Heart right ventricle (tissue), 16 donors: ENCODE measurements at regions of chr1 and their contacts with region 1.

Region 1: DNA sequence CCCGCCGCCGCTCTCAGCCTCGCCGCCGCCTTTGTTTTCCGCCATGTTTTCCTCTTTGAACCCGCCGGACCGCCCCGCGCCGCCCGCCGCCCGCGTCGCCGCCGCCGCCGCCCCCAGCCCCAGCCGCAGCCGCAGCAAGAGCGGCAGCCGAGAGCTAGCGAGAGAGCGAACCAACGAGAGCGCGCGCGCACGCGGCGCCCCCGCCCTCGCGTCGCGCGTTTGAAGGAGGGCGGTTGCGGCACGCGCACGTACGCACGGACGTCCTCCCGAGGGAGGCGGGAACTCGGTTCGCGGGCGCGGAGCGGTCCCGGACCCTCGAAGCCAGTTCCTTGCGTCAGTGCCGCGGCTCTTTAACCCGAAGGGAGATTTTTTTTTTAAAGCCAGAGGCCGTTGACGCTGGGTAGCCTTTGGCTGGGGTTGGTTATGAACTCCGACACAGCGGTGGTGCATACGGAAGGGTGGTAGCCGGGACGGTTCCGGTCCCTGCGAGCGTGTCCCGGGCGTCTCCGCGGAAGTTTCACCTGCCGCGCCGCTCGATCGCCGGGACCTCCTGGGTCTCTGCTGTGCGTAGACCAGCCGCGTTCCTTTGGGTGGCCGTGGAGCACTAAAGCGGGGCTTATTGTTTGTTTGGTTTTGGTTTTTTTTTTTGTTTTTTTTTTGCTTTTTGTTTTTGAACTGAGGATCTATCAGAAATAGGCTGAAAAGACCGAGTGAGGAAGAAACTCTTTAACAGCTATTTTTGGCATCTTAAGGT is at the start of gene TRIM33:
- DNase-seq: peak; percentile 92 to 94
- ATAC-seq: peak; percentile 95 to 97 (median 96)
- H3K4me3 ChIP-seq: peak within 1 kb of the TSS; percentile 82 to 100 (median 94)
- H3K27ac ChIP-seq: peak within 1 kb of the TSS; percentile 89 to 99 (median 96)
- H3K4me1 ChIP-seq: peaks cover 6 to 50% (median 41%) of the 10 kb centered on the region in 9 donors
- H3K27me3 ChIP-seq: no peaks in the 10 kb centered on the region
- CTCF ChIP-seq: peak in 2 of 9 donors; percentile 8 to 17
- total RNA-seq, gene TRIM33: 13.6 to 28.7 (median 21.4) TPM

Region 2: GRCh38 chr1:114346480-114347029 is 164.7 kb before region 1 on chr1:
- intact Hi-C with region 1: loop called in 2 of 10 experiments (anchors 5 kb)
- DNase-seq: peak; percentile 93 to 97
- ATAC-seq: peak; percentile 98 to 99 (median 98)
- H3K4me3 ChIP-seq: peak overlapping the region; percentile 44 to 65 (median 56)
- H3K27ac ChIP-seq: peak overlapping the region in 9 of 10 donors; percentile 36 to 87 (median 74)
- H3K4me1 ChIP-seq: peaks cover 2 to 24% (median 9%) of the 10 kb centered on the region in 9 donors
- H3K27me3 ChIP-seq: no peaks in the 10 kb centered on the region
- CTCF ChIP-seq: peak in 7 of 9 donors; percentile 100

Region 3: DNA sequence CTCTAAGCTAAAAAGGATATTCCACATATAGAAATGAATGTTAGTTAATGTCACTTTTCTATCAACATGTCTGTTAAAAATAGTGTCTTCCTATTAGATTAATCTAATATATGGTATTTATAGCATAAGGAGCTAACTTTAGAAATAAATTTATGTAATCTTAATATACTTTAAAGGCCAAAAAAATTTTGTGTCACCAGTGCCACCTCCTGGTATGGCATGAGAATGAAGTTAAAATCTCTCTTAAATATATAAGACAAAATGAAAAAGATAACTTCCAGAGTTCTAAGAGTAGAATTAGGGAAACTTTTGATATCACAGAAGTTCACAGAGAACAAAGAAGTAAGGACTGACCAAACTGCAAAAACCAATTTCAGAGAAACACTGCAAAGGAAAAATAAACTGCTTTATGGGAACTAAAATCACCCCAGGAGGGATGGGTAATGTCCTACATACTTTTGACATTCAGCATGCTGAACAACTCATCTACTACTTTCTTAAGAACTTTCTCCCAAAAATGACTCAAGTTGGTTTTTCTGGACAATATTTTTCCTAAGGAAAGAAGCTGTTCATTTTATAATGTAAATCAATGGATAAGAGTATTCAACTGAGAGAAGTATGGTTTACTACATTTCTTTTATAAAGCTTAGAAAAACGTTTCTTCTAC is 83.0 kb before region 1 on chr1:
- intact Hi-C with region 1: loop called in 1 of 10 experiments (anchors 5 kb)
- DNase-seq: no peak
- ATAC-seq: peak in 1 of 8 donors; percentile 12
- H3K4me3 ChIP-seq: no peak overlapping the region
- H3K27ac ChIP-seq: peak overlapping the region in 2 of 10 donors; percentile 4 to 15
- H3K4me1 ChIP-seq: peaks cover 0 to 19% (median 5%) of the 10 kb centered on the region in 9 donors
- H3K27me3 ChIP-seq: no peaks in the 10 kb centered on the region
- CTCF ChIP-seq: peak in 8 of 9 donors; percentile 18 to 61 (median 51)

Region 4: GRCh38 chr1:114446198-114446597 is 65.0 kb before region 1 on chr1:
- intact Hi-C with region 1: loop called in 1 of 10 experiments (anchors 10 kb)
- DNase-seq: no peak
- ATAC-seq: no peak
- H3K4me3 ChIP-seq: no peak overlapping the region
- H3K27ac ChIP-seq: peak overlapping the region in 1 of 10 donors; percentile 20
- H3K4me1 ChIP-seq: peaks cover 0 to 26% (median 10%) of the 10 kb centered on the region in 9 donors
- H3K27me3 ChIP-seq: no peaks in the 10 kb centered on the region
- CTCF ChIP-seq: no peak

Region 5: GRCh38 chr1:114569006-114569405 is 57.8 kb after region 1 on chr1:
- intact Hi-C with region 1: loop called in 1 of 10 experiments (anchors 5 kb)
- DNase-seq: no peak
- ATAC-seq: no peak
- H3K4me3 ChIP-seq: no peak overlapping the region
- H3K27ac ChIP-seq: no peak overlapping the region
- H3K4me1 ChIP-seq: no peaks in the 10 kb centered on the region
- H3K27me3 ChIP-seq: no peaks in the 10 kb centered on the region
- CTCF ChIP-seq: no peak

Region 6: DNA sequence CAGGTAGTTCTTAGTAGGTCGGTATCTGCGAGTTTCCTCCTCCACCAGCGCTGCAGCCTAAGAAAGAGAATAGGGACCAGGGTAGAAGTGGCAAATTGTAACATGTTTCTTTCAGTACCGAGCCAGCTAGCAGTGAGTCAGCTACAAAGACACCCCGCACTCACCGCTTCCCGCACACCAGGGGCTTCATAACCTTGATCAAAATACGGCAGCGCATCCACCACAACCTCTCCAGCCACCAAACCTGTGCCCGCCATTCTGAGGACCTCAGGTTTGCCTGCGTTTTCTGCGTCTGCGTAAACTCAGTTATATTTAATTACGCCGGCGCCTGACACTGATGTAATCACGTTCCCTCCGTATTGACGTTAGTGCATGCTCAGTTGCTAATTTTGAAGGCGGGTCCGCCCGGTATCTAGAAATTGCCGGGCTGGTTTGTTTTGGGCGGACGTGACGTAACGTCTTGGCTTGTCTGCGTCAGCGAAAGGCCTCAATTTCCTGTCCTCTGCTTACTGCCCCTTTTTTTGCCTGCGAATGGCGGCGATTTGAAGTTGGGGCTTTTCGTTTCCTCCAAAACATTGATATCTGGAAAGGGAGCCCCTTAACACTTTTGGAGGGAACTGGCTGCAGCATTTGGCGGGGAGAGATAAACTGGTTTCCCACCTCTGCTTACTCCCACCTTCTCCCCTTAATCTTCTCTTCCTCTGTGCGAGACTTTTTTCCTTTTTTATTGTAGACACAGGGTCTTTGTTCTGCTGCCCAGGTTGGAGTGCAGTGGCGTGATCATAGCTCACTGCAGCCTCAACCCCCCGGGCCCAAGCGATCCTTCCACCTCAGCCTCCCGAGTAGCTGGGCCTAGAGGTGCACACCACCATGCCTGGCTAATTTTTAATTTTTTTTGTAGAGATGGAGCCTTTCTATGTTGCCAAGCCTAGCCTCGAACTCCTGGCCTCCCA is 70.4 kb after region 1 on chr1 and contains the start of gene BCAS2:
- intact Hi-C with region 1: loop called in 2 of 10 experiments (anchors 5 to 10 kb)
- DNase-seq: peak; percentile 91 to 98
- ATAC-seq: peak; percentile 97 to 100 (median 99)
- H3K4me3 ChIP-seq: peak within 1 kb of the TSS; percentile 59 to 86 (median 64)
- H3K27ac ChIP-seq: peak within 1 kb of the TSS; percentile 75 to 91 (median 88)
- H3K4me1 ChIP-seq: peaks cover 8 to 44% (median 29%) of the 10 kb centered on the region in 9 donors
- H3K27me3 ChIP-seq: no peaks in the 10 kb centered on the region
- CTCF ChIP-seq: no peak
- total RNA-seq, gene BCAS2: 26.9 to 52.6 (median 36.4) TPM

Region 7: GRCh38 chr1:114757455-114758250 is 246.4 kb after region 1 on chr1 and contains the start of gene CSDE1:
- intact Hi-C with region 1: loop called in 2 of 10 experiments (anchors 2 to 5 kb)
- DNase-seq: peak; percentile 95 to 98
- ATAC-seq: peak; percentile 97 to 99 (median 98)
- H3K4me3 ChIP-seq: peak within 1 kb of the TSS; percentile 70 to 97 (median 92)
- H3K27ac ChIP-seq: peak within 1 kb of the TSS; percentile 92 to 100 (median 98)
- H3K4me1 ChIP-seq: peaks cover 3 to 52% (median 45%) of the 10 kb centered on the region in 9 donors
- H3K27me3 ChIP-seq: no peaks in the 10 kb centered on the region
- CTCF ChIP-seq: peak in 7 of 9 donors; percentile 37 to 64 (median 42)
- total RNA-seq, gene CSDE1: 720 to 1,012 (median 916) TPM